ENCODE measurements at regions of chr19 and their contacts with region 1.

Region 1: DNA sequence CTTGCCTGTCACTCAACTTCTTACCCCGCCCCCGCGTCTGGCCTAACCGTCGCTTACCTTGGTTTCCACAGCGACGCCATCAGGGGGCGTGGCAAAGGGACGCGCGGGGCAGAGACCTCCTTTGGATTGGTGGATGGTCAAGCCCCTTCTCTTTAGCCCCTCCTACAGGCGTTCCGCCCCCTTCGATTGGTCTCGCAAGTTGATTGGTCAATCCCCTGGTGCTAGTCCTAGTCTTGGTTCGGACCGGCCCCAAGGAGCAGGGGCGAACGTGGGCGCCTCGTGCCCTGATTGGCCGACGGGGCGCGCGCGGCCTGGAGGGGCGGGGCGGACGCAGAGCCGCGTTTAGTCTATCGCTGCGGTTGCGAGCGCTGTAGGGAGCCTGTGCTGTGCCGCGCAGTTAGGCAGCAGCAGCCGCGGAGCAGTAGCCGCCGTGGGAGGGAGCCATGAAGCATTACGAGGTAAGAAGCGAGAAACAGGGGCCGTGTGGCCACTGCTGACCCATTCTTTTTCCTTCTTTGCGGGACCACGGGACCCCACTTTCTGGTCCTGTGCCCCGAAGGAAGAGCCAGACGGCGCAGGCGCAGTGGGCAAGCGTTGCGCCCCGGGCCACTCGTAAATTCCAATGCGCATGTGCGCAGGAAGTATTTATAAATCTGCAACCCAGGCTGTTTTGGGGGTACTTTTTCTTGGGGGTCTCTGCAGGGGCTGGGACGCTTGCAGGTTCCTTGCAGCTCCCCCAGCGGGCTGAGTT is at the start of gene TECR:
- DNase-seq: peak; percentile 100
- H3K4me3 ChIP-seq: peak within 1 kb of the TSS; percentile 24 to 90 (median 67)
- H3K27ac ChIP-seq: peak within 1 kb of the TSS; percentile 27
- H3K4me1 ChIP-seq: peaks cover 7% of the 10 kb centered on the region
- H3K27me3 ChIP-seq: no peaks in the 10 kb centered on the region
- CTCF ChIP-seq: no peak
- POLR2A ChIP-seq: peak; percentile 94
- total RNA-seq, gene TECR: 109 and 110 TPM in 2 replicates

Region 2: GRCh38 chr19:14472202-14472938 is 57.1 kb before region 1 on chr19:
- CTCF ChIA-PET with region 1: no interaction called
- POLR2A ChIA-PET with region 1: no interaction called
- dilution Hi-C with region 1: no loop called
- intact Hi-C with region 1: no loop called
- DNase-seq: peak; percentile 51
- H3K4me3 ChIP-seq: no peak overlapping the region
- H3K27ac ChIP-seq: no peak overlapping the region
- H3K4me1 ChIP-seq: peaks cover 24% of the 10 kb centered on the region
- H3K27me3 ChIP-seq: no peaks in the 10 kb centered on the region
- CTCF ChIP-seq: peak; percentile 96 to 97
- POLR2A ChIP-seq: no peak

Region 3: GRCh38 chr19:15107061-15108010 is 577.9 kb after region 1 on chr19 and contains the start of gene SYDE1:
- CTCF ChIA-PET with region 1: no interaction called
- POLR2A ChIA-PET with region 1: no interaction called
- dilution Hi-C with region 1: no loop called
- intact Hi-C with region 1: loop called (anchors 5 kb)
- DNase-seq: peak; percentile 26
- H3K4me3 ChIP-seq: peak within 1 kb of the TSS; percentile 82 to 93 (median 93)
- H3K27ac ChIP-seq: peak within 1 kb of the TSS; percentile 60
- H3K4me1 ChIP-seq: peaks cover 8% of the 10 kb centered on the region
- H3K27me3 ChIP-seq: no peaks in the 10 kb centered on the region
- CTCF ChIP-seq: no peak
- POLR2A ChIP-seq: peak; percentile 75
- total RNA-seq, gene SYDE1: 35.3 and 38.2 TPM in 2 replicates

Measured in endothelial cell of umbilical vein (primary cell).